Common myeloid progenitor, CD34-positive (primary cell): ENCODE measurements at regions of chr12 and their contacts with region 1.

Region 1: DNA sequence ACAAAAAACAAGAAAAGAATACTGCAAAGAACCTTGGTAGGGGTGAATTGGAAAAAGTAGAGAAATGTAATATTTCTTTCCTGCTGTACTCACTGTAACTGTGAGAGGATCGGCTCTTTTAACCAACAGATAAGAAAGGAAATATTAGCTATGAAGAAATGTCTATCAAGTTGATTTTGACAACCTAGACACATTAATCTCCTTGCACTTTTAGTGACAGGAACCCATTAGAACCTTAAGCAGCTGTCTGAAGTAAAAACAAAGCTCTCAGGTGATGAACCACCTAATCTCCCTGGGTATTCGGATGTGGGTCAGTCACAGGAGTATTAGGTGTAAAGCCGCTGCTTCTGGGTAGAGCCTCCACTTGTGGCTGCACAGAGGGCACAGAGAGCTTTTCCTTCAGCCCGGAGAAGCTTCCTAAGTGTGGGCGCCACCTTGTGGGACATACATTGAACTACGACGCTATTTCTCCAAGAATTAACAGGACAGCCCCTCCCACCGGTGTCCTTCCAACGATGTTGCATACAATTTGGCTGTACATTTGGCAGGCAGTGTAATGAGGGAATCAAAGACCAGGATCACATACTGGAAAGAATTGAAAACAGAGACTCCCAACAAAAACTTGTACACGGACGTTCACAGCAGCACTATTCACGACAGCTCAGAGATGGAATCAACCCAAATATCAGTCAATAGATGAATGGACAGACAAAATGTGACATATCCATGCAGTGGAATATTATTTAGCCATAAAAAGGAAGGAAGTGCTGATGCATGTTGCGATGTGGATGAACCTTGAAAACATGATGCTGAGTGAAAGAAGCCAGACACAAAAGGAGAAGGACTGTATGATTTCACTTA is 28.9 kb upstream of the MAPKAPK5 start:
- DNase-seq: peak; percentile 79 to 88 (median 85)
- H3K4me3 ChIP-seq: no peak overlapping the region
- H3K27ac ChIP-seq: no peak overlapping the region
- H3K4me1 ChIP-seq: no peaks in the 10 kb centered on the region
- H3K27me3 ChIP-seq: no peaks in the 10 kb centered on the region

Region 2: GRCh38 chr12:111799758-111800157 is 13.4 kb before region 1 on chr12:
- CTCF ChIA-PET with region 1: interaction called, 17 read pairs
- POLR2A ChIA-PET with region 1: no interaction called
- DNase-seq: no peak
- H3K4me3 ChIP-seq: no peak overlapping the region
- H3K27ac ChIP-seq: no peak overlapping the region
- H3K4me1 ChIP-seq: no peaks in the 10 kb centered on the region
- H3K27me3 ChIP-seq: no peaks in the 10 kb centered on the region

Region 3: DNA sequence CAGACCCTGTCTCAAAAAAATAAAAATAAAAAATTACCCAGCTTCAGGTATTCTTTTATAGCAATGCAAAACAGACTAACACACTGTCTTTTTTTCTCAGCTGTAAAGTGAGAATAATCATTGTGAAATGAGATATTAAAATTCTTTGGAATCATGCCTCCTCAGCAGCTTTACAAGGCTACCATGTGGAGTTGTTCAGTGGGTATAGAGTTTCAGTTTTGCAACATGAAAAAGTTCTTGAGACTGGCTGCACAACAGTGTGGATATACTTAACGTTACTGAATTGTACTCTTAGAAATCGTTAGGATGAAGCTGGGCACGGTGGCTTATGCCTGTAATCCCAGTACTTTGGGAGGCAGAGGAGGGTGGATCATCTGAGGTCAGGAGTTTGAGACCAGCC is 13.2 kb after region 1 on chr12:
- CTCF ChIA-PET with region 1: interaction called, 19 read pairs
- POLR2A ChIA-PET with region 1: no interaction called
- DNase-seq: no peak
- H3K4me3 ChIP-seq: no peak overlapping the region
- H3K27ac ChIP-seq: no peak overlapping the region
- H3K4me1 ChIP-seq: no peaks in the 10 kb centered on the region
- H3K27me3 ChIP-seq: no peaks in the 10 kb centered on the region